Right cardiac atrium (tissue), 5 donors: ENCODE measurements at regions of chr2 and their contacts with region 1.

Region 1: DNA sequence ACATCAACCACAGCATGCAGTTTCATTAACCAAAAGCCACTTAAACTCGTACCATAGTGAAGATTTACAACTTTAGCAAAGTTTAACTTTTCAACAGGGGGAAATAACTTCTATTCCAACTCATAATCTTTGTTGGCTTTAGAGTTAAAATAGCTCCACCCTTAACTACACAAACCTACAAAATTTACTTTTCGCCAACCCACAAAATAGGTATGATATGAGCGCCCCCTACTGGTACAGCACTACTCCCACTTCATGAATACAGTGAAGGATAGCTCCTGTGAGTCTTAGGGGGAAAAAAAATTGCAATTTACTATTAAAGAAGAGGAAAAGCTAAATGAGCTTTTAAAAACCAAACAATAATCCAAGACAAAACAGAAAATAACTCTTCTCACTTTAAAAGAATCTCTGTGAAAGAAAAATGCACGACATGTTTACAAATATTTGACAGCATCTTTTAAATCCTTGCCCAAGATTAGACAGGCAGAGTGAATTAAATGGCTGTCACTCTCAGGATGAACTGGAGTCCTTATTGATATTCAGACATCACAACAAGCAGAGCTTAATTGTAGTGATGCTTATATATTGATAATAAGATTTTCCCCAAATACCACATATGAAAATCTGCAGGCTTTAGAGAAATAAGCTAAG is 32.2 kb downstream of the TMEFF2 start:
- DNase-seq: peak in 2 of 3 donors; percentile 34 to 55
- ATAC-seq: peak; percentile 84 to 86
- H3K4me3 ChIP-seq: peak overlapping the region; percentile 40
- H3K27ac ChIP-seq: no peak overlapping the region
- H3K4me1 ChIP-seq: no peaks in the 10 kb centered on the region
- H3K27me3 ChIP-seq: no peaks in the 10 kb centered on the region

Region 2: GRCh38 chr2:191566344-191566743 is 596.2 kb before region 1 on chr2:
- intact Hi-C with region 1: loop called in 1 of 4 experiments (anchors 10 kb)
- DNase-seq: peak; percentile 56 to 76 (median 60)
- ATAC-seq: peak; percentile 66 to 67
- H3K4me3 ChIP-seq: no peak overlapping the region
- H3K27ac ChIP-seq: no peak overlapping the region
- H3K4me1 ChIP-seq: no peaks in the 10 kb centered on the region
- H3K27me3 ChIP-seq: no peaks in the 10 kb centered on the region

Region 3: GRCh38 chr2:191811807-191812602 is 350.5 kb before region 1 on chr2:
- intact Hi-C with region 1: loop called (anchors 1 to 5 kb)
- DNase-seq: peak; percentile 35 to 77 (median 68)
- ATAC-seq: peak; percentile 82 to 88
- H3K4me3 ChIP-seq: peak overlapping the region; percentile 46
- H3K27ac ChIP-seq: no peak overlapping the region
- H3K4me1 ChIP-seq: no peaks in the 10 kb centered on the region
- H3K27me3 ChIP-seq: no peaks in the 10 kb centered on the region

Region 4: GRCh38 chr2:192070099-192070498 is 92.4 kb before region 1 on chr2:
- intact Hi-C with region 1: no loop called
- DNase-seq: no peak
- ATAC-seq: no peak
- H3K4me3 ChIP-seq: no peak overlapping the region
- H3K27ac ChIP-seq: no peak overlapping the region
- H3K4me1 ChIP-seq: no peaks in the 10 kb centered on the region
- H3K27me3 ChIP-seq: no peaks in the 10 kb centered on the region